B cell (primary cell): ENCODE measurements at regions of chr20 and their contacts with region 1.

Region 1: GRCh38 chr20:50189681-50190582 is 698 bp upstream of the CEBPB start:
- DNase-seq: peak; percentile 89
- ATAC-seq: peak; percentile 73
- H3K4me3 ChIP-seq: peak overlapping the region; percentile 15 to 83 (median 68)
- H3K4me3 Mint-ChIP-seq: peak overlapping the region; percentile 72
- H3K27ac ChIP-seq: no peak overlapping the region
- H3K27ac Mint-ChIP-seq: peak overlapping the region; percentile 80
- H3K4me1 ChIP-seq: peaks cover 16 to 28% of the 10 kb centered on the region in 2 donors
- H3K4me1 Mint-ChIP-seq: peaks cover 16% of the 10 kb centered on the region
- H3K27me3 ChIP-seq: peaks cover 0 to 10% (median 2%) of the 10 kb centered on the region in 4 experiments
- H3K27me3 Mint-ChIP-seq: peaks cover 11% of the 10 kb centered on the region
- CTCF ChIP-seq: peak; percentile 75

Region 2: GRCh38 chr20:50179507-50180016 is 10.4 kb before region 1 on chr20:
- CTCF ChIA-PET with region 1: interaction called, 14 read pairs
- POLR2A ChIA-PET with region 1: no interaction called
- intact Hi-C with region 1: no loop called
- DNase-seq: no peak
- ATAC-seq: peak; percentile 25
- H3K4me3 ChIP-seq: no peak overlapping the region
- H3K4me3 Mint-ChIP-seq: no peak overlapping the region
- H3K27ac ChIP-seq: no peak overlapping the region
- H3K27ac Mint-ChIP-seq: no peak overlapping the region
- H3K4me1 ChIP-seq: no peaks in the 10 kb centered on the region
- H3K4me1 Mint-ChIP-seq: no peaks in the 10 kb centered on the region
- H3K27me3 ChIP-seq: peaks cover 0 to under 1% (median 0%) of the 10 kb centered on the region in 4 experiments
- H3K27me3 Mint-ChIP-seq: peaks cover 9% of the 10 kb centered on the region
- CTCF ChIP-seq: peak; percentile 55

Region 3: DNA sequence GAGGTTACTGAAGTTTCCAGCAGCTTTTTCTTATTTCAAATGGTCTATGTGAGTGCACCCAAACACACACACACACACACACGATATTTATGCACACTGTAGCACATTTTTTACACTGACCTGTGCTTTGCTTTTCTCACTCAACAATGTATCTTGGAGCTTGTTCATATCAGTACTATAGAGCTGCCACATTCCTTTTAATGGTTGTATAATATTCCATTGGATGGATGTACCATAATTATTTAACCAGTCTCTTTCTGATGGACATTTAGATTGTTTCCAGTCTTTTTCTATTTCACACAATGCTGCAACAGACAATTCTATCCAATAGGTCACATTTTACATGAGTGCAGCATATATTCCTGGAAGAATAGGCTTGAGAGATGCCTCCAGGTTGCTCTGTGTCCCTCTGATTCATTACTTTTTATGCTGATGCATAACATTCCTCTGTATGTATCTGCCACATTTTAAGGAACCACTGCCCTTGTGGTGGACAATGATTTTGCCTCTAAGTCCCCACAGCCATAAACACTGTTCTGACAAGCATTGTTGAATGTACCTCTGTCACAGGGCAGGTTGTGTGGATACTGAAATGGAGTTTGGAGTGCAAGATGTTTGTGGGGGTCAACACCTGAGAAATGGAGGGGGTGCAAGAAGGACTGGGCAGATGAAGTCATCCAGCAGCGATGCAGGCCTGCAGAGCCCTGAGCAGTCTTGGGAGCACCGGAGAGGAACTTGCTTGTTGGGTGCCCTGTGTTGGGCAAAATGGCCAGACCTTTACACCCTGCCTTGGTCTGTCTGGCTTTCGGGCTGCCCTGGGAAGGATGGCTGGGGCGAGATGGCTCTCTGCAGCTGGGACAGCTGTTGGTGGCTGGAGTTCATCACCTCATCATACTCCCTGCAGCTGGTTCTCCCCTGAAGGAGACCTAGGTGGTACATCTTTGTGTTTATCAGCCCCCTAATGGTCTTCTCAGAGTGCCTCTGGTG is 14.3 kb after region 1 on chr20:
- CTCF ChIA-PET with region 1: no interaction called
- POLR2A ChIA-PET with region 1: no interaction called
- intact Hi-C with region 1: no loop called
- DNase-seq: no peak
- ATAC-seq: no peak
- H3K4me3 ChIP-seq: no peak overlapping the region
- H3K4me3 Mint-ChIP-seq: no peak overlapping the region
- H3K27ac ChIP-seq: no peak overlapping the region
- H3K27ac Mint-ChIP-seq: no peak overlapping the region
- H3K4me1 ChIP-seq: no peaks in the 10 kb centered on the region
- H3K4me1 Mint-ChIP-seq: no peaks in the 10 kb centered on the region
- H3K27me3 ChIP-seq: no peaks in the 10 kb centered on the region
- H3K27me3 Mint-ChIP-seq: peaks cover 15% of the 10 kb centered on the region
- CTCF ChIP-seq: no peak

Region 4: DNA sequence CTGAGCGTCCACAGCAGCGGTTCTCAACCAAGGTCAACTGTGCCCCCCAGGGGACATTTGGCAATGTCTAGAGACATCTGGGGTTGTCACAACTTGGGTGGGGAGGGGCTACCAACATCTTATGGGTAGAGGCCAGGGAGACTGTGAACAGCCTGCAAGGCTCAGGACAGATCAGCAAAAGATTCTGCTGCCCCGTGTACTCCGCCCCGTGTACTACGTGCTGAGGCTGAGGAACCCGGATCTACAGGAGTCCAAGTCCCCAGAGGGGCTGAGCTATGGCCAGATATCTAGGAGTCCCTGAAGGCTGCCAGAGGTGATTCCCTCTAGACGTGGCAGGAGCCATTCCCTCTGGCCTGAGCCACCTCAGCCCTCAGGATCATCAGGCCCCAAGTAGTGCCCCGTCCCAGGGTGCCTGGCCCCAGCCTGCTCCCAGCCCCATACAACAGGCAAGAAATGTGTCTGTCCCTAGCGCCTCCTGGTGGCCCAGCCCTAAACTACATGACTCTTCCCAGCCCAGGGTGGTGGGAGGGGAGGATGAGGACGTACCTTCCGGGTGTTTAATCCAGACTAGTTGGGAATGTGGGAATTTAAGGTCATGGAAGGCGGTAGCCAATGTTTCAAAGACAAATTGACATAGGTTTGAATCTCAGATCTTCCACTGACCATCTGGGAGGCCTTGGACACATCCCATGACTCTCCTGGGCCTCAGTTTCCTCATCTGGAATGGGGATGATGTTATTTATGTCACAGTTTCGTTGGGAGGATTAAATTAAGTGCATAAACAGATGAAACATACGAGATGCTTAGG is 270.7 kb after region 1 on chr20:
- CTCF ChIA-PET with region 1: interaction called, 91 read pairs
- POLR2A ChIA-PET with region 1: no interaction called
- intact Hi-C with region 1: loop called (anchors 1 kb)
- DNase-seq: peak; percentile 78
- ATAC-seq: peak; percentile 81
- H3K4me3 ChIP-seq: no peak overlapping the region
- H3K4me3 Mint-ChIP-seq: no peak overlapping the region
- H3K27ac ChIP-seq: no peak overlapping the region
- H3K27ac Mint-ChIP-seq: no peak overlapping the region
- H3K4me1 ChIP-seq: peaks cover 3 to 7% of the 10 kb centered on the region in 2 donors
- H3K4me1 Mint-ChIP-seq: peaks cover 2% of the 10 kb centered on the region
- H3K27me3 ChIP-seq: peaks cover 0 to 21% (median 5%) of the 10 kb centered on the region in 4 experiments
- H3K27me3 Mint-ChIP-seq: peaks cover 24% of the 10 kb centered on the region
- CTCF ChIP-seq: peak; percentile 85

Region 5: GRCh38 chr20:50467718-50468356 is 277.9 kb after region 1 on chr20:
- CTCF ChIA-PET with region 1: interaction called, 91 read pairs
- POLR2A ChIA-PET with region 1: no interaction called
- intact Hi-C with region 1: loop called (anchors 1 kb)
- DNase-seq: no peak
- ATAC-seq: no peak
- H3K4me3 ChIP-seq: no peak overlapping the region
- H3K4me3 Mint-ChIP-seq: no peak overlapping the region
- H3K27ac ChIP-seq: no peak overlapping the region
- H3K27ac Mint-ChIP-seq: peak overlapping the region; percentile 11
- H3K4me1 ChIP-seq: peaks cover 22 to 33% of the 10 kb centered on the region in 2 donors
- H3K4me1 Mint-ChIP-seq: peaks cover 26% of the 10 kb centered on the region
- H3K27me3 ChIP-seq: peaks cover 0 to 5% (median 2%) of the 10 kb centered on the region in 4 experiments
- H3K27me3 Mint-ChIP-seq: no peaks in the 10 kb centered on the region
- CTCF ChIP-seq: no peak

Region 6: DNA sequence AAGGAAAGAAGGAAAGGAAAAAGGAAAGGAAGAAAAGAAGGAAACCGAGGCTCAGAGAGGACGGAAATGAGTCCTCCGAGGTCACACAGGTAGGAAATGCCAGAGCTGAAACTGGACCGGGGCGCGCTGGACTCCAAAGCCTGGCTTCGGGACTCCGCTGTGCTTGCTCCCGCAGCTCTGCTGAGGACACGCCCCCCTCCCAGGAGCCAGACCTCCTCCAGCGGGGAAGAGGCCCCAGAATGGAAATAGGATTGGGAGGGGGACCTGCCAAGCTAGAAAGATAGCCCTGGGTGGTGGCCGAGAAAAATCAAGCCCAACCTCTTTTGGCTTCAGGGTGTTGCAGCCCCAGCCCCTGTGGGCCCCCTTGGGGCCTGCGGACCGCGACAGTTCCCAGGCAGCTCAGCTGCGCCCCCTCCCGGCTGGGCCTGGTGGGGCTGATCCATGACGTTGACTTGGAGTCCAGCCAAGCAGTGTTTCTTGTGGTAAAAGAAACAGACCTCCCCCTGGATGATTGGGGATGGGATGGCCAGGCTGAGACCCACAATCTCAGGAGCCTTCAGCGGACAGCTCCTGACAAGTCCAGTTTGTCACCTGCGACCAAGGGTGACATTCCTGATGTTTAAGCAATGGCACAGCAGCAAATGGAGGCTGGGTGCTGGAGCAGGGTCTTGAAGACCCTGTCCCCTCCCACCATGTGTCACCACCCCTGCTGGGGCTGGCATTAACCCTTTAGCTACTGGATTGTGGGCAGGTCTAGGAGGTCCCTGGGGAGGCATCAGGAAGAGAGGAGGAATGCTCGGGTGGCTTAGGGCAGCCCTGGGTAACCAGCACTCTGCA is 446.0 kb after region 1 on chr20:
- CTCF ChIA-PET with region 1: interaction called, 6 read pairs
- POLR2A ChIA-PET with region 1: no interaction called
- intact Hi-C with region 1: loop called (anchors 1 kb)
- DNase-seq: peak; percentile 64
- ATAC-seq: peak; percentile 65
- H3K4me3 ChIP-seq: no peak overlapping the region
- H3K4me3 Mint-ChIP-seq: no peak overlapping the region
- H3K27ac ChIP-seq: no peak overlapping the region
- H3K27ac Mint-ChIP-seq: no peak overlapping the region
- H3K4me1 ChIP-seq: no peaks in the 10 kb centered on the region
- H3K4me1 Mint-ChIP-seq: peaks cover 2% of the 10 kb centered on the region
- H3K27me3 ChIP-seq: peaks cover 0 to 2% (median 0%) of the 10 kb centered on the region in 4 experiments
- H3K27me3 Mint-ChIP-seq: peaks cover 11% of the 10 kb centered on the region
- CTCF ChIP-seq: peak; percentile 76

Region 7: DNA sequence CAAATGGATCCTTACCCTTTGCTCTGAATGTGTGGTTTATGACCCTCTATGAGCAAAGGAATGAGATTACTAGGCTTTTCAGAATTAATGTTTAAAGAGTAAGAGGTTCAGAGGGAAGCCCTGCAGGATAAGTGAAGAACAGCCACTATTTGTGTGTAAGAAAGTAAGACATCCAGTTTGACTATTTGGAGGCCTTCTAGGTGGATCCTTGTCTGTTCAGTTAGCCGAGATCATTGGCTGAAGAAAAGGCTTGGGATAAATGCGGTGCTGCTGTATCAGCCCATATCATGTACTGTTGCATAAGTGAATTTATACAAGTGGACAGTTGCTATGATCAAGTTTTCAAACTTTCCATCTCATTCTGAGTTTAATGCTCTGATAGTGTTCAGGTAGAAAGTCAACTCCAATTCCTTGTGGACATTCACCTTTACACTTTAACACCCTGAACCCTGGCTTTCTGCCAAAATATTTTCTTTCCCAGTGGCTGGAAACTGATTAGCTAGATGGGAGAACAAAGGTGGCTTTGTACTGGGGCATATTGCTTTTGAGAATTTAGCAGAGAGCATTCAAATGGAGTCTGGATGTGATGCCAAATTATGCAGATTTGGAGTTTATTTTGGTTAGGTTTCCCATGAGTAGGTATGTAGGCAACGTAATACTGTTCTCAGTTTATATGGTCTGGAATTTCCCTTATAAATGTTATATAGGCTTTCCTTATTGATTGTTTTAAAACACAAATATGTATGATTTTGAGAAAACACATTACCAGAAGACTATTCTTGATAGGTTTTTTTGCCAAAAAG is 556.4 kb after region 1 on chr20:
- CTCF ChIA-PET with region 1: interaction called, 95 read pairs
- POLR2A ChIA-PET with region 1: no interaction called
- intact Hi-C with region 1: no loop called
- DNase-seq: no peak
- ATAC-seq: no peak
- H3K4me3 ChIP-seq: no peak overlapping the region
- H3K4me3 Mint-ChIP-seq: no peak overlapping the region
- H3K27ac ChIP-seq: no peak overlapping the region
- H3K27ac Mint-ChIP-seq: no peak overlapping the region
- H3K4me1 ChIP-seq: peaks cover 0 to 3% of the 10 kb centered on the region in 2 donors
- H3K4me1 Mint-ChIP-seq: peaks cover 6% of the 10 kb centered on the region
- H3K27me3 ChIP-seq: no peaks in the 10 kb centered on the region
- H3K27me3 Mint-ChIP-seq: no peaks in the 10 kb centered on the region
- CTCF ChIP-seq: no peak